ENCODE measurements at regions of chr5 and their contacts with region 1.

Region 1: GRCh38 chr5:55936100-55936693 is 58.6 kb downstream of the IL6ST start:
- DNase-seq: peak; percentile 80
- H3K4me3 Mint-ChIP-seq: no peak overlapping the region
- H3K27ac Mint-ChIP-seq: no peak overlapping the region
- H3K4me1 Mint-ChIP-seq: peaks cover 35% of the 10 kb centered on the region
- H3K27me3 Mint-ChIP-seq: no peaks in the 10 kb centered on the region
- CTCF ChIP-seq: peak; percentile 79

Region 2: DNA sequence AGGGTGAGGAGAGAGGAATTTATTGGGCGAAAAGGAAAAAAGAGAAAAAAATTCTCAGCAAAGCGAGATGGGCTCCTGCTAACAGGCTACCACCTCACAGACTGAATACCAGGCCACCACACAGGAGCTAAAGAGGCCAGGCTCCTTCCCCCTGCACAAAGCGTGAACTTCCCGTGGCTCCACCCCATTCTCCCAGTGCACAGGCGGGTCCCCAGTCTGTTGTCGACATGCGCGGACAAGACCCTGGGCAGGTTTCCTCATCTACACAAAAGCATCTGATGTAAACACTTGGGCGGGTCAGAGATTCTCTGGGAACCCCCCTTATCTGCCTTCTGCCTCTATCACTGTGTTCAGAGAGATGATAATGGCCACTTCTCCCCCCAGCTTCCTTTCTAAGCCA is 50.8 kb before region 1 on chr5:
- CTCF ChIA-PET with region 1: no interaction called
- intact Hi-C with region 1: no loop called
- DNase-seq: no peak
- H3K4me3 Mint-ChIP-seq: no peak overlapping the region
- H3K27ac Mint-ChIP-seq: no peak overlapping the region
- H3K4me1 Mint-ChIP-seq: peaks cover 34% of the 10 kb centered on the region
- H3K27me3 Mint-ChIP-seq: no peaks in the 10 kb centered on the region
- CTCF ChIP-seq: no peak

Region 3: DNA sequence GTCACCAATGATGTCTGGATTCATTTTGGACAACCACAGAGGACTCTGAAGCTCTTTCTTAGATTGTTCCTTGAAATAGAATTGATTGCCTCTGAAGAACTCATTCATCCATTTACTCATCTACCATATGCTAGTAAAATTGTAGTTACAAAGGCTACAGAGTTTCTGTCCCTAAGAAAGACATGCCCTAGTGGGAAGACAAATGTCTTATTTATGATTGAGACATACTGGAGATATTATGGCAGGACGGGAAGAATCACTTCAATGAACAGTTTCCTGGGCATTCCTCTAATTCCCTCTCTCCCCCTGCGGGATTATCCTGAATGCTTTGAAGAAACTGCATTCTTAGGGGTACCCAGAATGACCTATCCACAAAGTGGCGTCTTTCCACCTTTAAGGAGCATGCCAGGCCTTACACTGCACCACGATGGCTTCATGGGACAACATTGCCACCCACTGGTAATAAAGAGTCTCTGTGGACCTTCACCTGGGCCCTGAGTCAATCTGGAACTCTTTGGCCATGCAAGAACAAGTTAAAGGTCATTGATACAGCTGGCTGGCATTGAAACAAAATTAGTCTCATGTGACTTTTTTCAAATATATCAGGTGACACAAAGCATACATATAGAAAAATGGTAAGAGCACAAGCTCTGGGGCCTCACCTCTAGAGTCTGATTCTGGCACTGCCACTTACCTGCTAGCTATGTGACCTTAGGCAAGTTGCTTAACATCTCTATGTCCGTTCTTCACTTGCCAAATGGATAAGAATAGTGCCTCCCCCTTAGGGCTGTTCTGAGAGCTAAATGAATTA is 264.9 kb after region 1 on chr5:
- CTCF ChIA-PET with region 1: interaction called, 24 read pairs
- intact Hi-C with region 1: loop called (anchors 1 kb)
- DNase-seq: peak; percentile 67
- H3K4me3 Mint-ChIP-seq: no peak overlapping the region
- H3K27ac Mint-ChIP-seq: no peak overlapping the region
- H3K4me1 Mint-ChIP-seq: peaks cover 9% of the 10 kb centered on the region
- H3K27me3 Mint-ChIP-seq: no peaks in the 10 kb centered on the region
- CTCF ChIP-seq: peak; percentile 84

Region 4: DNA sequence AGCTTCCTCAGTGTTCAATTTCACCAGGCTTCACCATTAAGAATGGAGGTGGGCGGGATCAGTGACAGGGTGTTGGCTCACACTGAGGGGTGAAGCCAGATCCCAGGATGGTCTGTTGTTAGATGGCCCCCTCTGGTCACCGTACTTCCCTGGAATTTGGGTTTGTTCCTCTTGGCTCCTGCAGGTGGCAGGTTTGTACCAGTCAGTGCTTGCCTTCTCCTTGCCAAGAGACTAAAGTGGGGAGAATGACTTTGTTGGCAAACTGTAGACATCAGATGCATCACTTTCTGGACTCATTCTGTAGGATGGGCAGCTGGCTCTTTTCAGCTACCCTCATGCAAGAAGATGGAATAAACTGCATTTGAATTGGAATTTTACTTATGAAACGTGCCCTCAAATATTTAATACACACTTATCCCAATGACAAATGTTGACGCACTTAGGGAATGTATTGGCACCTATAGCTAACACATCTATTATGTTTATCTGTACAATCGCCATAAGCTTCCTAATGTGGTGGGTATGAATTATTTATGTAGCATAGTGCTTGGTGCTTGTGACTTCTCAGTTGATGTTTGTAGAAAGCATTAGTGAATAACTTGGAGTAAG is 328.3 kb after region 1 on chr5:
- CTCF ChIA-PET with region 1: interaction called, 3 read pairs
- intact Hi-C with region 1: loop called (anchors 2 kb)
- DNase-seq: peak; percentile 64
- H3K4me3 Mint-ChIP-seq: no peak overlapping the region
- H3K27ac Mint-ChIP-seq: no peak overlapping the region
- H3K4me1 Mint-ChIP-seq: peaks cover 5% of the 10 kb centered on the region
- H3K27me3 Mint-ChIP-seq: no peaks in the 10 kb centered on the region
- CTCF ChIP-seq: peak; percentile 80